Heart right ventricle (tissue), 16 donors: ENCODE measurements at regions of chr17 and their contacts with region 1.

Region 1: GRCh38 chr17:36505171-36505570 is 18.7 kb downstream of the ZNHIT3 start:
- DNase-seq: no peak
- ATAC-seq: no peak
- H3K4me3 ChIP-seq: no peak overlapping the region
- H3K27ac ChIP-seq: no peak overlapping the region
- H3K4me1 ChIP-seq: peaks cover 0 to 16% (median 6%) of the 10 kb centered on the region in 9 donors
- H3K27me3 ChIP-seq: no peaks in the 10 kb centered on the region
- CTCF ChIP-seq: no peak

Region 2: GRCh38 chr17:36755586-36755985 is 250.4 kb after region 1 on chr17:
- intact Hi-C with region 1: no loop called
- DNase-seq: no peak
- ATAC-seq: no peak
- H3K4me3 ChIP-seq: no peak overlapping the region
- H3K27ac ChIP-seq: no peak overlapping the region
- H3K4me1 ChIP-seq: no peaks in the 10 kb centered on the region
- H3K27me3 ChIP-seq: peaks cover 5 to 77% (median 45%) of the 10 kb centered on the region in 7 donors
- CTCF ChIP-seq: peak in 2 of 9 donors; percentile 11 to 28

Region 3: GRCh38 chr17:36859706-36860105 is 354.5 kb after region 1 on chr17:
- intact Hi-C with region 1: loop called in 1 of 10 experiments (anchors 5 kb)
- DNase-seq: no peak
- ATAC-seq: no peak
- H3K4me3 ChIP-seq: no peak overlapping the region
- H3K27ac ChIP-seq: no peak overlapping the region
- H3K4me1 ChIP-seq: no peaks in the 10 kb centered on the region
- H3K27me3 ChIP-seq: peaks cover 0 to 88% (median 60%) of the 10 kb centered on the region in 7 donors
- CTCF ChIP-seq: no peak